Posterior vena cava (tissue), 2 donors: ENCODE measurements at regions of chr21 and their contacts with region 1.

Region 1: DNA sequence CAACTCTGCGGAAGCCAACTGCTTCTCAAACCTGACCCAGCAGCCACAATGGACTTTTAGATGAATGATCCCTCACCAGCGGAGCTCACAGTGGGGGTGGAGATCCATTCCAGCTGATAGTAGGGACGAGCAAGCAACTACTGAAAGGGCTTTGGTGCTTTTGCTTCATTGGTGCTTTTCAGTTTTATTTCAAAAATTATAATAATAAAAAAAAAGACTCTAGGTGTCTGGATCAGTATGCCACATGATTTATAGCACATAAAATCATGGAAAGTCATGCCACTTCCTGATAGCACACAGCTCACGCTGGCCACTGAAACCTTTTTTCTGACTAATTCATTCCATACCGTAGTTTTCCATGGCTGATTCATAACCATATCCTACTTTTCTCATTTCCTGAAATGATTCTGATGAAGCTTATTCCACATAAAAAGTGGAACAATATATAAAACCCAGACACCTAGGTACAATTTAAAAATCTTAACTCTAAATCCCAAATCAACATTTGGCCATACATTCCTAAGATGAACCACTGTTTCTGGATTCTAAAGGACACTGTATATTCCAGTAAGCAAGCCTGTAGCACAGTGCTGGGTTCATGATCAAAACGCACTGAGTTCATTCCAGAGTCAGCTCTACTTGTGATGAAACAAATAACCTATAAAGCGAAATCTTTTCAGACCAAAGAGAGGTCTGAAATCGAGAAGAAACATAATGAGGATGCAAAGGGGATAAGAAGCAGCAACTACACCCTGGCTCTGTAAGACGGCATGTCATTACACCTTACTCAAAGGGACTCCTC is 41.3 kb upstream of the KCNE1 start:
- DNase-seq: no peak

Region 2: DNA sequence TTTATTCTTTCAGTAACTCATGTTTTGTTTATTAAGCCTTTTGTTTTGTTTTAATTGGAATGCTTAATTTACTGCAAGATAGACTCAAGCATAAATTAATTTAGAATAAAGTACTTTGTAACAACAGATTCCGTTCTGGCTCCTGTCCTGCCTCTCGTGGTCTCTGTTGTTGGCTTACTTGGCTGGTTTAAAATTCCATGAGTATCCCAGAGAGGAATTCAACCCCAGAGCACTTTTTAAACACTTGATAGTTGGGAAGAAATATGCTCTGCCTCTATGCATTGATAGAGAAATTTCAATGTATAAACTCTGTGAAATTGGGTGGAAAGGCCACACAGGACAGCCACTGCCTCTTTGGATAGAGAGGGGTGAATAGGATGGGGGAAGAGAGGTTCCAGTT is 727.4 kb before region 1 on chr21:
- intact Hi-C with region 1: loop called in 1 of 2 experiments (anchors 5 kb)
- DNase-seq: no peak

Region 3: GRCh38 chr21:34526618-34527290 is 26.6 kb before region 1 on chr21:
- intact Hi-C with region 1: loop called in 1 of 2 experiments (anchors 1 kb)
- DNase-seq: peak; percentile 91

Region 4: GRCh38 chr21:34569376-34569979 is 16.1 kb after region 1 on chr21:
- intact Hi-C with region 1: loop called in 1 of 2 experiments (anchors 1 kb)
- DNase-seq: no peak

Region 5: GRCh38 chr21:34845521-34846451 is 292.4 kb after region 1 on chr21:
- intact Hi-C with region 1: no loop called
- DNase-seq: no peak